Breast epithelium (tissue), 4 donors: ENCODE measurements at regions of chr3 and their contacts with region 1.

Region 1: GRCh38 chr3:99620077-99620767 is 18.2 kb upstream of the COL8A1 start:
- DNase-seq: no peak
- H3K4me3 ChIP-seq: no peak overlapping the region
- H3K27ac ChIP-seq: no peak overlapping the region
- H3K4me1 ChIP-seq: no peaks in the 10 kb centered on the region
- H3K27me3 ChIP-seq: no peaks in the 10 kb centered on the region
- CTCF ChIP-seq: no peak
- POLR2A ChIP-seq: no peak

Region 2: GRCh38 chr3:98901392-98902350 is 718.6 kb before region 1 on chr3 and contains the start of gene DCBLD2:
- intact Hi-C with region 1: no loop called
- DNase-seq: peak; percentile 97
- H3K4me3 ChIP-seq: peak within 1 kb of the TSS; percentile 94 to 98 (median 95)
- H3K27ac ChIP-seq: peak within 1 kb of the TSS; percentile 89 to 91
- H3K4me1 ChIP-seq: no peaks in the 10 kb centered on the region
- H3K27me3 ChIP-seq: no peaks in the 10 kb centered on the region
- CTCF ChIP-seq: no peak
- POLR2A ChIP-seq: peak; percentile 16
- total RNA-seq, gene DCBLD2: 27.2 to 46.7 (median 29.6) TPM

Region 3: GRCh38 chr3:99586701-99587100 is 33.5 kb before region 1 on chr3:
- intact Hi-C with region 1: loop called (anchors 2 kb)
- DNase-seq: no peak
- H3K4me3 ChIP-seq: no peak overlapping the region
- H3K27ac ChIP-seq: no peak overlapping the region
- H3K4me1 ChIP-seq: no peaks in the 10 kb centered on the region
- H3K27me3 ChIP-seq: no peaks in the 10 kb centered on the region
- CTCF ChIP-seq: no peak
- POLR2A ChIP-seq: no peak